MCF 10A (cell line): ENCODE measurements at regions of chr16 and their contacts with region 1.

Region 1: GRCh38 chr16:48004141-48004695 is 151.6 kb downstream of the ABCC12 start:
- DNase-seq: no peak
- H3K4me3 Mint-ChIP-seq: no peak overlapping the region
- H3K27ac Mint-ChIP-seq: no peak overlapping the region
- H3K4me1 Mint-ChIP-seq: peaks cover 6% of the 10 kb centered on the region
- H3K27me3 Mint-ChIP-seq: no peaks in the 10 kb centered on the region
- CTCF ChIP-seq: no peak

Region 2: GRCh38 chr16:47970291-47970931 is 33.8 kb before region 1 on chr16:
- CTCF ChIA-PET with region 1: no interaction called
- POLR2A ChIA-PET with region 1: no interaction called
- intact Hi-C with region 1: loop called (anchors 1 kb)
- DNase-seq: peak; percentile 78
- H3K4me3 Mint-ChIP-seq: no peak overlapping the region
- H3K27ac Mint-ChIP-seq: no peak overlapping the region
- H3K4me1 Mint-ChIP-seq: no peaks in the 10 kb centered on the region
- H3K27me3 Mint-ChIP-seq: peaks cover 30% of the 10 kb centered on the region
- CTCF ChIP-seq: no peak

Region 3: GRCh38 chr16:48284772-48285409 is 280.7 kb after region 1 on chr16:
- CTCF ChIA-PET with region 1: no interaction called
- POLR2A ChIA-PET with region 1: no interaction called
- intact Hi-C with region 1: no loop called
- DNase-seq: no peak
- H3K4me3 Mint-ChIP-seq: no peak overlapping the region
- H3K27ac Mint-ChIP-seq: no peak overlapping the region
- H3K4me1 Mint-ChIP-seq: peaks cover 16% of the 10 kb centered on the region
- H3K27me3 Mint-ChIP-seq: no peaks in the 10 kb centered on the region
- CTCF ChIP-seq: no peak